ENCODE measurements at regions of chr1 and their contacts with region 1.

Region 1: DNA sequence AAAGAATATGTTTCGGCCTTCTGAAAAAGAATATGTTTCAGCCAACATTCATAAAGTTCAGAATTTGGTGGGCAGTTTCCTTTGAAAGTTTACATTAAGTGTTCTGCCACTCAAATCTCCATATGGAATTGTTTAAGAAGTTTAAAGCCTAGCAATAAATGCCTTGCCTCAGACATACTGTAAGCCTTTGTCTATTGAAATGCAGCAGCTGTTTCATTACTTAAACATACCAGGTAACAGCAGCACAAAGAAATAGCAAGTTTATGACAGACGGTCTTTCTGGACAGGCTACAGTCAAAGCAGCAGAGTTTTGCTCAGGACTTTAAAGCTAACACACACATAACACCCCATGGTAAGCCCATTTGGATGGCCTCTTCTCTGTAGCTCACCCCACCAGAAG is 38.5 kb upstream of the C1orf105 start:
- DNase-seq: no peak
- ATAC-seq: no peak
- H3K4me3 ChIP-seq: no peak overlapping the region
- H3K27ac ChIP-seq: no peak overlapping the region
- H3K4me1 ChIP-seq: no peaks in the 10 kb centered on the region
- H3K27me3 ChIP-seq: no peaks in the 10 kb centered on the region
- CTCF ChIP-seq: no peak

Region 2: GRCh38 chr1:172069534-172069933 is 312.4 kb before region 1 on chr1:
- CTCF ChIA-PET with region 1: no interaction called
- POLR2A ChIA-PET with region 1: interaction called, 15 read pairs
- intact Hi-C with region 1: no loop called
- DNase-seq: no peak
- ATAC-seq: no peak
- H3K4me3 ChIP-seq: no peak overlapping the region
- H3K27ac ChIP-seq: no peak overlapping the region
- H3K4me1 ChIP-seq: no peaks in the 10 kb centered on the region
- H3K27me3 ChIP-seq: no peaks in the 10 kb centered on the region
- CTCF ChIP-seq: no peak

Region 3: GRCh38 chr1:172561252-172561651 is 179.3 kb after region 1 on chr1:
- CTCF ChIA-PET with region 1: no interaction called
- POLR2A ChIA-PET with region 1: no interaction called
- intact Hi-C with region 1: no loop called
- DNase-seq: peak; percentile 98
- ATAC-seq: peak; percentile 84
- H3K4me3 ChIP-seq: no peak overlapping the region
- H3K27ac ChIP-seq: peak overlapping the region; percentile 29
- H3K4me1 ChIP-seq: peaks cover 28% of the 10 kb centered on the region
- H3K27me3 ChIP-seq: no peaks in the 10 kb centered on the region
- CTCF ChIP-seq: no peak